ENCODE measurements at regions of chr11 and their contacts with region 1.

Region 1: DNA sequence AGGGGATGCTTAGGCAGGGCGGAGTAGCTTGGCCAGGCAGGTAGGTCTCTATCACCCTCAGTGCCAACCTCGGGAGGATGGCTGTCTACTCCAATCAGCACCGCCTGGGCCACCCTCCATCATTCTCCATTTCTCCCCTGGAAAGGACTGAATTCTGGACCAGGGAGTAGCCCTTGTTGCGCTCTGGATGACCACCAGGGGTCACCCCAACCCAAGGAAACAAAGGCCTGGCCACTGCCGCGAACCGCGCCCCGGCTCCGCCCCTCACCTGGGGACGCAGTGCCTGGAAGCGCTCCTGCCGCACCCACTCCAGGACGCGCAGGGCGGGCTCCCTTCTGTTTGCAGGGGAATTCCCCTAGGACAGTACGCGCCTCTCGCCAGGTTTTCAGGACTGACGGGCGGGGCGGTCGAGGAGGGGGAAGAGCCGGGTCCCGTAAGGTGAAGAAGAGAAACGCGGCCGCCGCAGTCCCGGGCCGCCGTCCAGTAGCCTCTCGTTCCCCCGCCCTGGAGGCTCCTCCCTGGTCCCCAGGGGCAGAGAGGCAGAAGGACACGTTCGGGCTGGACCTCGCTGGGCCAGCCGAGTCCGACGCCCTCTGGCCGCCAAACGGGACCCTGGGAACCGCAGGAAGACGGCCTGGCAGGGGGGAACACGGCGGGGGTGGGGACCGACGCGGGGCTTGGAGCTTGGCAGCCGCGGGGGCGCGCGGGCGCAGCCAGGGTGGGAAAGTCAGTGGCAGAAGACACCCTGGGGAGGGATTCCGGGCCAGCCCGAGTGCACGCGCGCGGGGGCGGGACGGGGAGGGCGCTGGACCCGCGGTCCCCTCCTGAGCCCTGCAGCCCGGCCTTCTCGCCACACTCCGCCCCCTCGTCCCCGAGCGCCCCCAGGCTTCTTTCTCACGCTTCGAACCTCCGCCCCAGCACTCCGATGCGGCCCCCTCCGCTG is 7.1 kb downstream of the SCN4B start:
- DNase-seq: peak; percentile 94
- H3K4me3 ChIP-seq: peak overlapping the region; percentile 46 to 48
- H3K27ac ChIP-seq: peak overlapping the region; percentile 16 to 68
- H3K4me1 ChIP-seq: no peaks in the 10 kb centered on the region
- H3K27me3 ChIP-seq: no peaks in the 10 kb centered on the region
- CTCF ChIP-seq: peak; percentile 81 to 98 (median 94)
- POLR2A ChIP-seq: peak; percentile 30

Region 2: GRCh38 chr11:118045191-118045590 is 100.4 kb before region 1 on chr11:
- intact Hi-C with region 1: no loop called
- DNase-seq: no peak
- H3K4me3 ChIP-seq: no peak overlapping the region
- H3K27ac ChIP-seq: no peak overlapping the region
- H3K4me1 ChIP-seq: no peaks in the 10 kb centered on the region
- H3K27me3 ChIP-seq: no peaks in the 10 kb centered on the region
- CTCF ChIP-seq: no peak
- POLR2A ChIP-seq: no peak

Region 3: DNA sequence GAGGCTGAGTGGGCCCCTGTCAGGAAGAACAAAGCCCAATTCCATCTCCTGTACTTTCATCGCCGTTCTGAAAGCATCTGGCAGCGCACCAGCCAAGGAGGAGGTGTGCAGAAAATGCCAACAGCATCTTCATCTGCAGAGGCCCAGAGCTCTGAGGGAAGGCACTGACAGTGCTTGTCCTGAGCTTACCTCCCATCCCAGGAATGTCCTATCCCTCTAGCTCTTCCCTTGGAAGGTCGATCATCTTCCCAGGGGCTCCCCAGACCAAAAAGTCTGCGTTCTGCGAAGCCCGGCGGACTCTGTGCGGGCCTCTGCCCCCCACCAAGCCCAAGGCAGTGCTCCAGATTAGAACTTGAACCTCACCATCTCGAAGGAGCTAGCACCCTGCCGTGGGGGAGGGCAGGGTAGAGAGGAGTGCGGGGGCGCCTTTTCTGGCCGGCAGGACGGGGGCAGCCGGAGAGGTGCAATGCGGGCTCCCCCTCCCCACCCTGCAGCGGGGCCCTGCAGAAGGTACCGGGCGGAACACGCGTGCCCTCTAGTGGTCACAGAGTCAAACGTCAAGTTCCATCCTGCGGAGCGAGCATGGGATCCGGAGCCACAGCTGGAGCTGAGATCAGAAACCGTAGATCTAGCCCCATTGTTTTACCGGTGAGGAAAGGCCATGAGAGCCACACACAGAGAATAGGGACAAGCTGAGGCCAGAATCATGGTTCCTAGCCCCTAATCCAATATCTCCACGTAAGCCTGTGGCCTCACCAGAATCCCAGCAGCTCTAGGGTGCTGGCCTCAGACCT is 25.9 kb after region 1 on chr11:
- intact Hi-C with region 1: loop called (anchors 1 kb)
- DNase-seq: peak; percentile 69
- H3K4me3 ChIP-seq: no peak overlapping the region
- H3K27ac ChIP-seq: no peak overlapping the region
- H3K4me1 ChIP-seq: no peaks in the 10 kb centered on the region
- H3K27me3 ChIP-seq: no peaks in the 10 kb centered on the region
- CTCF ChIP-seq: peak; percentile 77 to 91 (median 86)
- POLR2A ChIP-seq: no peak

Region 4: GRCh38 chr11:118353084-118353710 is 207.6 kb after region 1 on chr11:
- intact Hi-C with region 1: loop called (anchors 5 kb)
- DNase-seq: no peak
- H3K4me3 ChIP-seq: no peak overlapping the region
- H3K27ac ChIP-seq: no peak overlapping the region
- H3K4me1 ChIP-seq: no peaks in the 10 kb centered on the region
- H3K27me3 ChIP-seq: no peaks in the 10 kb centered on the region
- CTCF ChIP-seq: peak; percentile 23 to 56 (median 42)
- POLR2A ChIP-seq: no peak

Measured in prostate gland (tissue), 2 donors.